MCF 10A (cell line): ENCODE measurements at regions of chr4 and their contacts with region 1.

Region 1: DNA sequence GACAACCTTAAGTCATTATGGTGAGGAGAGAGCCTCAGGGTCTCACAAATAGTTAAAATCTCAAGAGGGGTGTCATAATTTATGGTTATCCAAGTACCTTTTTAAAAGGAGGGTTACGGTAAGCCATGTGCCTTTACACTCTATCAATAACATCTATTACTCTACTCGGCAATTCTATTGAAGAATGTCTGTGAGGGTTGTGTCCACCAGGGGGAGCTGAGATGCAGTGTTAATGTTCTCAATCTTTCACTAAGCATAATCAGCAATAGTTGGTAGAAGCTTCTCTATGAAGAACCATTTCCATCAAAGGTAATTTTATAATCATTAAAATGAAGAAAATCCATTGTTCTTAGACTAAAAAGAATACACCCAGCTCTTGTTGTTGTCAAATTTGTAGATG is 457.4 kb downstream of the CENPC start:
- DNase-seq: peak; percentile 64
- H3K4me3 Mint-ChIP-seq: no peak overlapping the region
- H3K27ac Mint-ChIP-seq: no peak overlapping the region
- H3K4me1 Mint-ChIP-seq: no peaks in the 10 kb centered on the region
- H3K27me3 Mint-ChIP-seq: no peaks in the 10 kb centered on the region
- CTCF ChIP-seq: peak; percentile 61

Region 2: GRCh38 chr4:66855956-66856355 is 231.9 kb before region 1 on chr4:
- CTCF ChIA-PET with region 1: no interaction called
- POLR2A ChIA-PET with region 1: no interaction called
- intact Hi-C with region 1: no loop called
- DNase-seq: peak; percentile 69
- H3K4me3 Mint-ChIP-seq: no peak overlapping the region
- H3K27ac Mint-ChIP-seq: no peak overlapping the region
- H3K4me1 Mint-ChIP-seq: no peaks in the 10 kb centered on the region
- H3K27me3 Mint-ChIP-seq: no peaks in the 10 kb centered on the region
- CTCF ChIP-seq: no peak

Region 3: DNA sequence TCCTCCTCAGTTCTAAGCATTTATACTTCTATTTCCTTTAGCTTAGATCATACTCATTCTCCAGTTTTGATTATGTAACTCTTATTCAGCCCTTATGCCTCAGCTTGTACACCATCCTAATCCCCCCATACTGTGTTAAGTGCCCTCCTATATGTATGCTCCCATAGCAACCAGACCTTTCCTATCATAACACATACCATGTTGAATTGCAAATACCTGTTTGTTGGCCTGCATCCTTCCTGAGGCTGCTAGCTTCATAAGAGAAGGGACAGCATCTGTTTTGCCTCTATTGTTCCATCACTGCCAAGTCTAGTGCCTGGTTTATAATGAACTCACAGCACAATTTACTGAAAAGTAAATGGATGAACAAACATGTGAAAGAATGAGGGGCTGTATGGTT is 13.7 kb after region 1 on chr4:
- CTCF ChIA-PET with region 1: interaction called, 17 read pairs
- POLR2A ChIA-PET with region 1: no interaction called
- intact Hi-C with region 1: no loop called
- DNase-seq: no peak
- H3K4me3 Mint-ChIP-seq: no peak overlapping the region
- H3K27ac Mint-ChIP-seq: no peak overlapping the region
- H3K4me1 Mint-ChIP-seq: peaks cover 11% of the 10 kb centered on the region
- H3K27me3 Mint-ChIP-seq: no peaks in the 10 kb centered on the region
- CTCF ChIP-seq: no peak

Region 4: GRCh38 chr4:67106861-67107460 is 19.1 kb after region 1 on chr4:
- CTCF ChIA-PET with region 1: interaction called, 17 read pairs
- POLR2A ChIA-PET with region 1: no interaction called
- intact Hi-C with region 1: no loop called
- DNase-seq: no peak
- H3K4me3 Mint-ChIP-seq: no peak overlapping the region
- H3K27ac Mint-ChIP-seq: no peak overlapping the region
- H3K4me1 Mint-ChIP-seq: peaks cover 11% of the 10 kb centered on the region
- H3K27me3 Mint-ChIP-seq: no peaks in the 10 kb centered on the region
- CTCF ChIP-seq: no peak

Region 5: GRCh38 chr4:67198727-67199126 is 110.8 kb after region 1 on chr4:
- CTCF ChIA-PET with region 1: interaction called, 3 read pairs
- POLR2A ChIA-PET with region 1: no interaction called
- intact Hi-C with region 1: loop called (anchors 1 kb)
- DNase-seq: peak; percentile 65
- H3K4me3 Mint-ChIP-seq: no peak overlapping the region
- H3K27ac Mint-ChIP-seq: no peak overlapping the region
- H3K4me1 Mint-ChIP-seq: no peaks in the 10 kb centered on the region
- H3K27me3 Mint-ChIP-seq: no peaks in the 10 kb centered on the region
- CTCF ChIP-seq: peak; percentile 29

Region 6: GRCh38 chr4:67332627-67333026 is 244.7 kb after region 1 on chr4:
- CTCF ChIA-PET with region 1: interaction called, 12 read pairs
- POLR2A ChIA-PET with region 1: no interaction called
- intact Hi-C with region 1: loop called (anchors 1 kb)
- DNase-seq: peak; percentile 33
- H3K4me3 Mint-ChIP-seq: no peak overlapping the region
- H3K27ac Mint-ChIP-seq: no peak overlapping the region
- H3K4me1 Mint-ChIP-seq: peaks cover 14% of the 10 kb centered on the region
- H3K27me3 Mint-ChIP-seq: peaks cover 15% of the 10 kb centered on the region
- CTCF ChIP-seq: peak; percentile 27

Region 7: DNA sequence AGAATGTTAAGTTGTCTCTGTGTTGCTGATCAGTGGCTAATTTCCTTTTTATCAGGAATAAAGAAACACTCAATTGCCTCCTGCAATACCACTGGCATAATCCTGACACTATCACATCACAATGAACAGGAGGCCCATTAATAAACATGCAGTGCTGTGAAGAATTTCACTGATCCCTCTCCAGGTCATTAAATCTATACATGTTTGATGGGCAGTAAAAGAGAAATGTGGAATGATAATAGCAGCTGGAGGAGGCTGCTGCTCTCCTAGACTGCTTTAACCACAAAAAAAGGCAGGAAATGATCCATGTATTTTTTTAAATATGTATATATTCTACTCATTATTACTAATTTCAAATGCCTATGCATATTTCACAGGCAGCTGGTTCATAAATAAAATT is 255.3 kb after region 1 on chr4:
- CTCF ChIA-PET with region 1: no interaction called
- POLR2A ChIA-PET with region 1: no interaction called
- intact Hi-C with region 1: no loop called
- DNase-seq: no peak
- H3K4me3 Mint-ChIP-seq: no peak overlapping the region
- H3K27ac Mint-ChIP-seq: no peak overlapping the region
- H3K4me1 Mint-ChIP-seq: no peaks in the 10 kb centered on the region
- H3K27me3 Mint-ChIP-seq: no peaks in the 10 kb centered on the region
- CTCF ChIP-seq: no peak

Region 8: DNA sequence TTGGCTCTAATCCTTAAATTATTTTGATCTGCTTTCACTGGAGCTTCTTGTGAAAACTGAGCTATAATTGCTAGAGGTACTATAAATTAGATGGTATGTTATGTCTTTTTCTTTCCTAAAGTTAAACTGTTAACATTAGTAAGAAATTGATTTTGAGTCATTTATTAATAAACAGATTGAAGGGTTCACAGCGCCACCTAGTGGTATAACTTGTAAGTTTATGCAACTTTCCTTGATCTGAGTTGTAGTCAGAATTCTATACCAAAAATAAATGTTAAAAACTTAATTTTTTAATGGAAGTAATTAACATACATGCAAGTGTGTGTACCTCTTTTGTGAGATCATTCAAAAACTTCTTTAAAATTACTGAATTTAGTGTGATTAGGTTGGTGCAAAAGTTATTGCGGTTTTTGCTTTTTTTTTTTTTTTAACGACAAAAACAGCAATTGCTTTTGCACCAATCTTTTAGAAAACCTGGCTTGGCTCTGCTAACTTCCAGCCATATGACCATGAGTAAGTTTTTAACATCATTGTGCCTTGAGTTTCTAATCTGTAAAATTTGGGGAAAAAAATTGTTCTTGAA is 305.9 kb after region 1 on chr4:
- CTCF ChIA-PET with region 1: interaction called, 18 read pairs
- POLR2A ChIA-PET with region 1: no interaction called
- intact Hi-C with region 1: loop called (anchors 2 kb)
- DNase-seq: peak; percentile 53
- H3K4me3 Mint-ChIP-seq: no peak overlapping the region
- H3K27ac Mint-ChIP-seq: no peak overlapping the region
- H3K4me1 Mint-ChIP-seq: peaks cover 5% of the 10 kb centered on the region
- H3K27me3 Mint-ChIP-seq: peaks cover 12% of the 10 kb centered on the region
- CTCF ChIP-seq: peak; percentile 57

Region 9: GRCh38 chr4:68995292-68995691 is 1907.4 kb after region 1 on chr4:
- CTCF ChIA-PET with region 1: no interaction called
- POLR2A ChIA-PET with region 1: no interaction called
- intact Hi-C with region 1: no loop called
- DNase-seq: no peak
- H3K4me3 Mint-ChIP-seq: no peak overlapping the region
- H3K27ac Mint-ChIP-seq: no peak overlapping the region
- H3K4me1 Mint-ChIP-seq: no peaks in the 10 kb centered on the region
- H3K27me3 Mint-ChIP-seq: no peaks in the 10 kb centered on the region
- CTCF ChIP-seq: no peak